Psoas muscle (tissue), 8 donors: ENCODE measurements at regions of chr4 and their contacts with region 1.

Region 1: GRCh38 chr4:91089194-91089593 is 962.0 kb downstream of the CCSER1 start:
- DNase-seq: no peak
- ATAC-seq: no peak
- H3K4me3 ChIP-seq: no peak overlapping the region
- H3K27ac ChIP-seq: no peak overlapping the region
- H3K4me1 ChIP-seq: no peaks in the 10 kb centered on the region
- H3K27me3 ChIP-seq: no peaks in the 10 kb centered on the region
- CTCF ChIP-seq: no peak

Region 2: DNA sequence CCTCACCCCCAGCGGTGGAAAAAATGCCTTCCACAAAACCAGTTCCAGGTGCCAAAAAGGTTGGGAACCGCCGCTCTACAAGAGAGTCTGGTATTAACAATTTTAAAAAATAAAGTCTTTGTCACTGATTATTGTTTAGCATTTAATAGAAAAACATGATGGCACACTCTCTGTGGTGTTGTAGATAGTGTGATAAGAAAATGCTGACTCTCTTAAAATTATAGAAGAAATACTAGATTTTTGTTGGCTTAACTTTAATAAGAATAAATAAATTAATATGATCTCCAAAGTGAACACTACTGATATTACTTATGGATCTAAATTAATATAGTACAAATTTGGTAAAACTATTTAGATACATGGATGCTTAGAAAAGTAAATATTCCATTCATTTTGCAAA is 18.5 kb before region 1 on chr4:
- intact Hi-C with region 1: loop called in 1 of 2 experiments (anchors 1 kb)
- DNase-seq: no peak
- ATAC-seq: no peak
- H3K4me3 ChIP-seq: no peak overlapping the region
- H3K27ac ChIP-seq: no peak overlapping the region
- H3K4me1 ChIP-seq: no peaks in the 10 kb centered on the region
- H3K27me3 ChIP-seq: no peaks in the 10 kb centered on the region
- CTCF ChIP-seq: no peak